Endothelial cell of umbilical vein (primary cell): ENCODE measurements at regions of chr6 and their contacts with region 1.

Region 1: DNA sequence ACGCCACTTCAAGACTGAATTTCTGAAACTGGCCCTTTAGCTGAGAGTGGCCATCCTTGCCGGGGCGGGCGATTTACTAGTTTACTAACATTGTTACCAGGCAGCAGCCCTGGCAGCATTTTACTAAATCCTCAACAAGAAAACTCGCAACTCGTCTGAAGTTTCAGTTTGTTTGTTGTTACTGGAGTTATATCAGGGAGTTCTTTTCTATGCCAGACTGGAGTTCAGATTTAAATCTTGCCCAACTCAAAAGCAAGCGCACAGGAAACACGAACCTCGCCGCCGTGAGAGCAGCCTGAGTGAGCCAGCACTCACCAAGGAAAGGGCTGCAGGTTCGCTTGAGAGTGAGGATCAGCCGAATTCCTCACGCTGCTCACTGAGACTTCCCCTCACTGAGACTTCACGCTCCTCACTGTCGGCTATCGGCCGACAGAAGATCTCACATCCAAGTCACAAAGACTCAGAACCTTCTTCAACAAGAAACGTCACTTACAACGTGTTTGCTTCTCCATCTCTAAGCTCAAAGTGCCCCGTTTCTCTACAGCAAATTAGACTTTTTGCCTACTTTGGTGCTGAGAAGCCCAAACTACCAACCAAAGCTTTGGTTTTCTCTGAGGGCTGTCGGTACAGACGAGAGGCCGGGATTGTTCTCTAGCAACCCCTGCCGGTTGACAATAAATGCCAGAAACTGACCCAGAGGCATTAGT is 78.9 kb downstream of the OLIG3 start:
- DNase-seq: peak; percentile 73
- H3K4me3 ChIP-seq: peak overlapping the region in 2 of 3 experiments; percentile 25 to 59
- H3K27ac ChIP-seq: no peak overlapping the region
- H3K4me1 ChIP-seq: no peaks in the 10 kb centered on the region
- H3K27me3 ChIP-seq: peaks cover 19 to 28% of the 10 kb centered on the region in 2 experiments
- CTCF ChIP-seq: peak; percentile 56 to 71
- POLR2A ChIP-seq: no peak

Region 2: DNA sequence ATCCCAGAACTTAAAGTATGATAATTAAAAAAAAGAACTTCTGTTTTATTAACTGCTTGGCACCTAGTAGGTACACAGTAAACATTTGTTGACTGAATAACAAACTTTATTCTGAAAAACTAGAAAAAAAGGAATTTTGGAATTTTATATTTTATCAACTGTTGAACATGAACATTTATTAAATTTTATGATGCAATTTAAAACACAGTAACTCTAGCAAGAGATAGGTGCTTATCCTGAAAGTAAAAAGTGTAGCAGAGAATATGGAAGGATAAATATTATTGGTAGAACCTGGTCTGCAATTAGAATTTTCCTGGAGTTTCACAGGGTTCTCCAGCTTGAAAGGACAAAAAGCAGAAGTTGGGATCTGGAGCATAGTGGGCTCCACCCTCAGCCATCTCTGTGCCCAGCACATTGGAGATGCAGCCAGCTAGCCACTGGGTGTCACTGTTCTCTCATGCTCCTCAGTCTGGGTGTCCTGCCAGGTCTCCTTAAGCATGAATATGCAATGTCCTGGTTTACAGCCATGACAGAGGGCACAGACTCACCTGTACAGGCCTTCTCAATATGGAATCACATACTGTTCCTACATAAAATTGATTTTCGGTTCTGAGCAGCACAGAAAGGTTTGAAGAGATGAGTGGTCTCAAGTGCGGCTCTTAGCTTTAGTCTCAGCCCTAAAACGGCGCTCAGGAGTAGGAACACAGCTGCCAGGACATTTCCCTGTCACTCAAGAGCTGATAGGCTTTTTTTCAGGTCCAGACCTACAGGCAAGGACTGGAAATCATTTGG is 338.8 kb before region 1 on chr6:
- CTCF ChIA-PET with region 1: interaction called, 4 read pairs
- POLR2A ChIA-PET with region 1: no interaction called
- dilution Hi-C with region 1: no loop called
- intact Hi-C with region 1: loop called (anchors 1 kb)
- DNase-seq: peak; percentile 60
- H3K4me3 ChIP-seq: no peak overlapping the region
- H3K27ac ChIP-seq: no peak overlapping the region
- H3K4me1 ChIP-seq: no peaks in the 10 kb centered on the region
- H3K27me3 ChIP-seq: peaks cover 2% of the 10 kb centered on the region in 2 experiments
- CTCF ChIP-seq: peak; percentile 67 to 76
- POLR2A ChIP-seq: no peak